Vagina (tissue), 2 donors: ENCODE measurements at regions of chr5 and their contacts with region 1.

Region 1: DNA sequence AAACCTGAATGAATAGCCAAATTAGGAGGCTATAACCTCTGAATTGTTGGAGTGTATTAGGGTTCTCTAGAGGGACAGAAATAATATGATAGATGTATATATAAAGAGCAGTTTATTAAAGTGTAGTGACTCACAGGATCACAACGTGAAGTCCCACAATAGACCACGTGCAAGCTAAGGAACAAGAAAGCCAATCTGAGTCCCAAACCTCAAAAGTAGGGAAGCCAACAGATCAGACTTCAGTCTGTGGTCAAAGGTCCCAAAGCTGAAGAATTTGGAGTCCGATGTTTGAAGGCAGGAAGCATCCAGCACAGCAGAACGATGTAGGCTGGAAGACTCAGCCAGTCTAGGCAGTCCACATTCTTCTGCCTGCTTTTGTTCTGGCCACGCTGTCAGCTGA is 550.7 kb downstream of the CDH10 start:
- DNase-seq: no peak
- H3K4me3 ChIP-seq: no peak overlapping the region
- H3K27ac ChIP-seq: no peak overlapping the region
- H3K4me1 ChIP-seq: no peaks in the 10 kb centered on the region
- H3K27me3 ChIP-seq: no peaks in the 10 kb centered on the region
- CTCF ChIP-seq: no peak
- POLR2A ChIP-seq: no peak

Region 2: GRCh38 chr5:22970956-22971618 is 1123.0 kb before region 1 on chr5:
- intact Hi-C with region 1: no loop called
- DNase-seq: no peak
- H3K4me3 ChIP-seq: no peak overlapping the region
- H3K27ac ChIP-seq: no peak overlapping the region
- H3K4me1 ChIP-seq: no peaks in the 10 kb centered on the region
- H3K27me3 ChIP-seq: no peaks in the 10 kb centered on the region
- CTCF ChIP-seq: no peak
- POLR2A ChIP-seq: no peak

Region 3: GRCh38 chr5:23064710-23065109 is 1029.4 kb before region 1 on chr5:
- intact Hi-C with region 1: loop called (anchors 5 kb)
- DNase-seq: no peak
- H3K4me3 ChIP-seq: no peak overlapping the region
- H3K27ac ChIP-seq: no peak overlapping the region
- H3K4me1 ChIP-seq: no peaks in the 10 kb centered on the region
- H3K27me3 ChIP-seq: no peaks in the 10 kb centered on the region
- CTCF ChIP-seq: no peak
- POLR2A ChIP-seq: no peak